Mammary epithelial cell (primary cell): ENCODE measurements at regions of chr7 and their contacts with region 1.

Region 1: GRCh38 chr7:16071246-16071857 is 350.0 kb downstream of the CRPPA start:
- DNase-seq: peak; percentile 32
- H3K4me3 ChIP-seq: no peak overlapping the region
- H3K27ac ChIP-seq: no peak overlapping the region
- H3K4me1 ChIP-seq: no peaks in the 10 kb centered on the region
- H3K27me3 ChIP-seq: no peaks in the 10 kb centered on the region
- CTCF ChIP-seq: peak; percentile 64 to 71

Region 2: GRCh38 chr7:14717816-14718215 is 1353.5 kb before region 1 on chr7:
- CTCF ChIA-PET with region 1: no interaction called
- dilution Hi-C with region 1: no loop called
- in situ Hi-C with region 1: no loop called
- intact Hi-C with region 1: loop called (anchors 5 kb)
- DNase-seq: no peak
- H3K4me3 ChIP-seq: no peak overlapping the region
- H3K27ac ChIP-seq: no peak overlapping the region
- H3K4me1 ChIP-seq: no peaks in the 10 kb centered on the region
- H3K27me3 ChIP-seq: no peaks in the 10 kb centered on the region
- CTCF ChIP-seq: peak; percentile 37 to 60

Region 3: GRCh38 chr7:14734839-14735321 is 1336.5 kb before region 1 on chr7:
- CTCF ChIA-PET with region 1: no interaction called
- dilution Hi-C with region 1: no loop called
- in situ Hi-C with region 1: loop called in 1 of 2 experiments (anchors 25 kb)
- intact Hi-C with region 1: no loop called
- DNase-seq: no peak
- H3K4me3 ChIP-seq: no peak overlapping the region
- H3K27ac ChIP-seq: no peak overlapping the region
- H3K4me1 ChIP-seq: peaks cover 7% of the 10 kb centered on the region
- H3K27me3 ChIP-seq: no peaks in the 10 kb centered on the region
- CTCF ChIP-seq: peak in 1 of 2 donors; percentile 41

Region 4: DNA sequence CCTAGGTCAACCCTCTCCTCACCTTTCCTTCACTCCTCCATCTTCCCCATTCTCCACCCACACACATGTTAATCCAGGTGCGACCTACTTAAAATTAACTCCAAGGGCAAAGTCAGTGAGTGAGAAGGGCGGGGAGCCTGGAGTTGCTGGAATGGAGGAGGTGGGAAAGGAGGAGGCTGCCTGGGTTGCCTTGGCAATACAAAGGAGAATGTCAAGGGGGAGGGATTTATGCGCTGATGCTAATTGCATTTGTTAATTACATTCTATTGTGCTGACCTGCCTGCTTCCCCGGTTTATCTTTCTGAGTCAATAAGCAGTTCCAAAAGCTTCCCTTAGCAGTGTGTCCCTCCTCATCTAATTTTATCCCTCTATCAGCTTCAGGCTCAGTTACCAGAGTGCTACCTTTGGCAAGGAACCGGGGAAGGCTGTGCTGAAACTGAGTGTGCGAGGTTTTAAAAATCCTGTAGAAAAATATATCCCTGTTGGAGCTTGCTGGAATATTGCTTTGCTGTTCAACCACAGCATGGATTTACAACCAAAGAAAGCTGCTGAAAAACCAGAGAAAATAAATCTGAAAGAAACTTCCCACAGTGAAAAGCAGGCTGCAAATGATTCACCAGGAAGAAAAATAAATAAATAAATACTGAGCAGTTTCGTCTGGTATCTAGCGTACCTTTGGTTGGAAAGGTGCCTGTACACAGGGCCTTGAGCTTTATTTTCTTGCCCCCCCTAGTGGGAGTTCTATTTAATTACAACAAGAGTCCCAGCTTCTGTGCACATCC is 1055.6 kb before region 1 on chr7:
- CTCF ChIA-PET with region 1: no interaction called
- dilution Hi-C with region 1: no loop called
- in situ Hi-C with region 1: no loop called
- intact Hi-C with region 1: loop called (anchors 10 kb)
- DNase-seq: peak; percentile 80
- H3K4me3 ChIP-seq: peak overlapping the region in 2 of 3 experiments; percentile 32 to 42
- H3K27ac ChIP-seq: peak overlapping the region; percentile 63
- H3K4me1 ChIP-seq: peaks cover 20% of the 10 kb centered on the region
- H3K27me3 ChIP-seq: no peaks in the 10 kb centered on the region
- CTCF ChIP-seq: peak; percentile 52 to 72

Region 5: DNA sequence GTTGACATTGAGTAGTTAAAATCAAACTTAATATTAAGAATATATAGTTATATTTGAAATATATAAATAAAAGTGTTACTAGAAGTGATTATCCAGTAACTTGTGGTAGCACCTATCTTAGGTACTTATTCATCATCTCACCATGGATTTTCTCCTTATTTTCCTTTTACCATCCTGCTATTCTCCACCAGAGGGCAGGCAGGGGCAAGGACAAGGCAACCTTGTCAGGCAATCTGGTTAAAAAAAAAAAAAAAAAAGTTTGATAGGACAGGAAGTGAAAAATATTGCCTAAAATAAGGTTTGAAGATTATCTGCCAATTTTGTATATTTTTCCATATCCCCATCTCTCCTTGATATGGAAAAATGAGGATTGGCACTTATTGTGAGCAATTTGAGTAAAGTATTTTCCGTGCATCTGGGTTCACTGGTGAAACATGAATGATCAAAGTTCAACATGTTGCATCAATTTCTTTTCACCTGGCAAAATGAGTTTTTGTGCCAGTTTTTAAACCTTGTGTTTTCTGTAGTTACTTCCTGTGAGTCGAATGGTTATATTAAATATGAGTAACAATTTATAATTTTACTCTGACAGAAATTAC is 766.3 kb before region 1 on chr7:
- CTCF ChIA-PET with region 1: no interaction called
- dilution Hi-C with region 1: no loop called
- in situ Hi-C with region 1: loop called (anchors 10 to 25 kb)
- intact Hi-C with region 1: loop called (anchors 1 kb)
- DNase-seq: peak; percentile 33
- H3K4me3 ChIP-seq: no peak overlapping the region
- H3K27ac ChIP-seq: no peak overlapping the region
- H3K4me1 ChIP-seq: no peaks in the 10 kb centered on the region
- H3K27me3 ChIP-seq: no peaks in the 10 kb centered on the region
- CTCF ChIP-seq: peak; percentile 72 to 79

Region 6: GRCh38 chr7:15326044-15326644 is 745.2 kb before region 1 on chr7:
- CTCF ChIA-PET with region 1: no interaction called
- dilution Hi-C with region 1: loop called (anchors 25 kb)
- in situ Hi-C with region 1: loop called in 1 of 2 experiments (anchors 25 kb)
- intact Hi-C with region 1: loop called (anchors 1 kb)
- DNase-seq: no peak
- H3K4me3 ChIP-seq: no peak overlapping the region
- H3K27ac ChIP-seq: no peak overlapping the region
- H3K4me1 ChIP-seq: no peaks in the 10 kb centered on the region
- H3K27me3 ChIP-seq: no peaks in the 10 kb centered on the region
- CTCF ChIP-seq: peak; percentile 12 to 51

Region 7: DNA sequence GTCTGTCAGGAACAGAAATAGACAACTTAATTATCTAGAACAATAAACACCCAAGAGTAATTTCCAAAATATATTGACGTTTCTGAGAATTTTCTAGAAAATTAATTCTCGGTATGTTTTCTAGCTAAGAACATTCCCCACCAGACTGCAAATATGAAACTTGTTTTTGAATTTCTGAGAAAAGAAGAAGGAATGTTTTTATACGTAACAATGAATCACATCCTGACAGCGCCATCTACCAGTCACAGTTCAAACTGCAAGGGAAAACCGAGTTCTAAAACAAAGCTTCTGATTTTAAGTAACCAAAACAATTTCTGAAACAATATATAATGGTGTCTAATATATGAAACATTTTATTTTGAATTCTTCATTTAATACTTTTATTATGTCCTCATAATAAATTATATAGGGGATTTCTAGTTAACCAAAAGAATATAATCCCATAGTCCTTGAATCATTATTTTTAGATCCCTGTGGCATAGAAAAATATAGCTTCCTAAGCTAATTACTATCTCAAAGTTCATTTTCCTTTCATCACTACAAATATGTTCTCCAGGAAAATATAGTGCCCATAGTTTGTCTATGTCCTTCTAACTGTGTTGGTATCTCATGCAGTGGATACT is 350.4 kb before region 1 on chr7:
- CTCF ChIA-PET with region 1: no interaction called
- dilution Hi-C with region 1: no loop called
- in situ Hi-C with region 1: no loop called
- intact Hi-C with region 1: loop called (anchors 10 kb)
- DNase-seq: peak; percentile 13
- H3K4me3 ChIP-seq: no peak overlapping the region
- H3K27ac ChIP-seq: no peak overlapping the region
- H3K4me1 ChIP-seq: no peaks in the 10 kb centered on the region
- H3K27me3 ChIP-seq: no peaks in the 10 kb centered on the region
- CTCF ChIP-seq: peak; percentile 71 to 77